ENCODE measurements at regions of chr17 and their contacts with region 1.

Region 1: DNA sequence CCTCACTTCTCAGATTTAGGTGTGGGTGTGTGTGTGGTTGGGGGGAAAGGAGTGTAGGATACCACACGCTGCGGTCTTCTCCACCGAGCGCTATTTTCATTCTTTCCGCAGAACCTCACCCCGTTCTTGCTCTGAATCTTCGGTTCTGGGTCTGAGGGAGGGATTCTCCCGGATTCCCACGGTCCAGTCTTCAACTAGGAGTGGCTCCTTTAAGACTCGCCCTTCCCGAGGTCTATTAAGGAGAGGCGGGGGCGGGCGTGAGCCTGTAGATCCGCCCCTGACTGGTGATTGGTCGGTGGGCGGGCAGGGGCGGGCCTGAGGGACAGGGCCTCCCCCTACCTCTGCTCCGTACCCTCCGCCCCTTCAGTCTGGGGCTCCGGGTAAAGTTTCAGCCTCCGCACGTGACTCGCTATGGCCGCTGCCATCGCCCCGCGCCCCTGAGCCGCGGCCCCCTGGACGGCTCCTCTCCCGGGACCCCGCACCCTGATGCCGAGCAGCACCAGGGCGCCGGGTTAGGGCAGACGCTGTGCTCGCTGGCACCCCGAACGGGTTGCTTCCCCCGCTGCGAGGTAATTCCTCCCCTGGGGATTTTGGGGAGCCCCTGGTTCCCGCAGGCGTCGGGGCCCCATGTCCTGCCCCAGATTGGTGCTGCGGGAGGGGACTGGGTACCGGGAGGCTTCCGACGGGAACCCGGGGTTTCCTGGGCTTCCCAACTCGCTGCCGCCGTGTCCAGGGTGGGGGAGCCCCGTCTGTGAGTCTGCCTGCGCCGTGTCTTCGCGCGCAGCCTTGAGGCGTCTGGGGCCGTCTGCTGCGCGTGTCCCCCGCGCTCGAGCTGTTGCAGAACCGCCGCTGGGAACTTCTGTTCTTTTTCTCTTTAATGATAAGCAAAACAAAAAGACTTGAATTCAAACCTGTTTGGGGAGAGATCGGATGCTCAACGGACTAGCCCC is 9.2 kb downstream of the RARA start:
- DNase-seq: peak; percentile 88 to 96 (median 91)
- ATAC-seq: peak; percentile 61
- H3K4me3 ChIP-seq: peak overlapping the region; percentile 91 to 95
- H3K4me3 Mint-ChIP-seq: peak overlapping the region; percentile 91
- H3K27ac ChIP-seq: peak overlapping the region; percentile 94 to 97
- H3K27ac Mint-ChIP-seq: peak overlapping the region; percentile 99
- H3K4me1 ChIP-seq: peaks cover 72% of the 10 kb centered on the region
- H3K4me1 Mint-ChIP-seq: peaks cover 87% of the 10 kb centered on the region
- H3K27me3 ChIP-seq: no peaks in the 10 kb centered on the region
- H3K27me3 Mint-ChIP-seq: no peaks in the 10 kb centered on the region
- CTCF ChIP-seq: no peak

Region 2: DNA sequence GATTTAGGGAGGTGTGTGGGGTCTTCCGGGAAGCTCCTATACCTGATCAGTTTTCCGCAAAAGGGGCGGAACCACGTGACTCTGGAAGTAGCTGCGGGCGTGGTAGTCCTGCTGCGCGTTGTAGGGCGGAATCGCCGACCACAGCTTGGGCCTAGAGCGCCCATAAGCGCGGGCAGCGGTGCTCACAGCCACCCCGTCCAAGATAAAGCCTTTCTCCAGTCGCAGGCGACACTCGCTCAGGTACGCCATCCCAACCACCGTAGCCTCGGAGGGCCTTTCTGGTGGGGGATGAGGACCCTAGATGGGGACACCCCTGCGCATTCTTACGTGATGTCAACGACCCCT is 1477.0 kb before region 1 on chr17:
- CTCF ChIA-PET with region 1: no interaction called
- POLR2A ChIA-PET with region 1: no interaction called
- intact Hi-C with region 1: no loop called
- DNase-seq: peak in 1 of 9 experiments; percentile 38
- ATAC-seq: no peak
- H3K4me3 ChIP-seq: peak overlapping the region in 1 of 2 experiments; percentile 28
- H3K4me3 Mint-ChIP-seq: peak overlapping the region; percentile 66
- H3K27ac ChIP-seq: no peak overlapping the region
- H3K27ac Mint-ChIP-seq: no peak overlapping the region
- H3K4me1 ChIP-seq: no peaks in the 10 kb centered on the region
- H3K4me1 Mint-ChIP-seq: no peaks in the 10 kb centered on the region
- H3K27me3 ChIP-seq: no peaks in the 10 kb centered on the region
- H3K27me3 Mint-ChIP-seq: no peaks in the 10 kb centered on the region
- CTCF ChIP-seq: no peak

Region 3: GRCh38 chr17:39769974-39770587 is 548.1 kb before region 1 on chr17:
- CTCF ChIA-PET with region 1: no interaction called
- POLR2A ChIA-PET with region 1: no interaction called
- intact Hi-C with region 1: loop called in 1 of 2 experiments (anchors 10 kb)
- DNase-seq: peak in 8 of 9 experiments; percentile 38 to 90 (median 66)
- ATAC-seq: peak; percentile 78
- H3K4me3 ChIP-seq: peak overlapping the region in 1 of 2 experiments; percentile 1
- H3K4me3 Mint-ChIP-seq: peak overlapping the region; percentile 66
- H3K27ac ChIP-seq: peak overlapping the region; percentile 46 to 82
- H3K27ac Mint-ChIP-seq: peak overlapping the region; percentile 97
- H3K4me1 ChIP-seq: peaks cover 99% of the 10 kb centered on the region
- H3K4me1 Mint-ChIP-seq: peaks cover 96% of the 10 kb centered on the region
- H3K27me3 ChIP-seq: no peaks in the 10 kb centered on the region
- H3K27me3 Mint-ChIP-seq: no peaks in the 10 kb centered on the region
- CTCF ChIP-seq: no peak

Region 4: DNA sequence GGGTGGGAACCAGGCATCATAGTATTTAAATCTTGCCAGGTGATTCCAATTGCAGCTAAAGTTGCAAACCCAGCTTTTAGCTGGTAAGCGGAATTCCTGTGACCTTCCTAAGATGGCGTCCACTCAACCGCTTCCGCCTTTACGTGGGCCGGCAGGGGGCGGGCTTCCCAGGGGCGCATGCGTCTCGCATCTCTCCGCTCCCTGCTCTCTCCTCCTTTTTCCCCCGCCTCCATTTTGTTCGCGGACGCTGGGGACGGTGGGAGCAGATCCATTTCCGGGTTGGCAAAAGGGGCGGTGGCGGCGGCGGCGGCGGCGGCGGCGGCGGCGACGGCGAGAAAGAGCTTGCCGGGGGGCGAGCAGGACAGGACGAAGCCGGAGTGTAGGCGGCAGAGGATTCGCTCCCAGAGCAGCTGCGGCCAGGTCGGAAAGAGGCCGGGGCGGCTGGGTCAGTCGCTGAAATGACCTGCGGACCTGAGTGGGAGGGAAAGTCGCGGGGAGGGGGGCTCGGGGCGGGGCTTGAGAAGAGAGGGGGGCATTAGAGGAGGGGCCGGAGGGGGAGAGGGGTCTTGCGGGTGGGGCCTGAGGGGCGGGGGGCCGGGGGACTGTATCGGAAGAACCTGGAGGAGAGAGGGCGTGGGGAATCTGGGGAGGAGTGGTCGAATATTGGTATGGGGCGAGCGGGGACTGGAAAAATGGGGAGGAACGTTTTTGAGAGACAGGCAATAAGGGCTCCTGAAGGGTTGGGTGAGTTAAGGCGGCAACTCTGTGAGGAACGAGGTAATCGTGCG is 98.9 kb before region 1 on chr17 and contains the start of gene WIPF2:
- CTCF ChIA-PET with region 1: no interaction called
- POLR2A ChIA-PET with region 1: no interaction called
- intact Hi-C with region 1: loop called in 1 of 2 experiments (anchors 1 kb)
- DNase-seq: peak; percentile 92 to 98 (median 96)
- ATAC-seq: peak; percentile 90
- H3K4me3 ChIP-seq: peak within 1 kb of the TSS; percentile 83 to 87
- H3K4me3 Mint-ChIP-seq: peak within 1 kb of the TSS; percentile 95
- H3K27ac ChIP-seq: peak within 1 kb of the TSS; percentile 99
- H3K27ac Mint-ChIP-seq: peak within 1 kb of the TSS; percentile 100
- H3K4me1 ChIP-seq: peaks cover 8% of the 10 kb centered on the region
- H3K4me1 Mint-ChIP-seq: peaks cover 30% of the 10 kb centered on the region
- H3K27me3 ChIP-seq: no peaks in the 10 kb centered on the region
- H3K27me3 Mint-ChIP-seq: no peaks in the 10 kb centered on the region
- CTCF ChIP-seq: peak; percentile 53
- total RNA-seq, gene WIPF2: 26.8 to 30.8 TPM

Region 5: GRCh38 chr17:40253565-40253964 is 64.6 kb before region 1 on chr17:
- CTCF ChIA-PET with region 1: no interaction called
- POLR2A ChIA-PET with region 1: no interaction called
- intact Hi-C with region 1: no loop called
- DNase-seq: no peak
- ATAC-seq: no peak
- H3K4me3 ChIP-seq: no peak overlapping the region
- H3K4me3 Mint-ChIP-seq: no peak overlapping the region
- H3K27ac ChIP-seq: no peak overlapping the region
- H3K27ac Mint-ChIP-seq: no peak overlapping the region
- H3K4me1 ChIP-seq: no peaks in the 10 kb centered on the region
- H3K4me1 Mint-ChIP-seq: peaks cover 31% of the 10 kb centered on the region
- H3K27me3 ChIP-seq: no peaks in the 10 kb centered on the region
- H3K27me3 Mint-ChIP-seq: no peaks in the 10 kb centered on the region
- CTCF ChIP-seq: no peak

Region 6: DNA sequence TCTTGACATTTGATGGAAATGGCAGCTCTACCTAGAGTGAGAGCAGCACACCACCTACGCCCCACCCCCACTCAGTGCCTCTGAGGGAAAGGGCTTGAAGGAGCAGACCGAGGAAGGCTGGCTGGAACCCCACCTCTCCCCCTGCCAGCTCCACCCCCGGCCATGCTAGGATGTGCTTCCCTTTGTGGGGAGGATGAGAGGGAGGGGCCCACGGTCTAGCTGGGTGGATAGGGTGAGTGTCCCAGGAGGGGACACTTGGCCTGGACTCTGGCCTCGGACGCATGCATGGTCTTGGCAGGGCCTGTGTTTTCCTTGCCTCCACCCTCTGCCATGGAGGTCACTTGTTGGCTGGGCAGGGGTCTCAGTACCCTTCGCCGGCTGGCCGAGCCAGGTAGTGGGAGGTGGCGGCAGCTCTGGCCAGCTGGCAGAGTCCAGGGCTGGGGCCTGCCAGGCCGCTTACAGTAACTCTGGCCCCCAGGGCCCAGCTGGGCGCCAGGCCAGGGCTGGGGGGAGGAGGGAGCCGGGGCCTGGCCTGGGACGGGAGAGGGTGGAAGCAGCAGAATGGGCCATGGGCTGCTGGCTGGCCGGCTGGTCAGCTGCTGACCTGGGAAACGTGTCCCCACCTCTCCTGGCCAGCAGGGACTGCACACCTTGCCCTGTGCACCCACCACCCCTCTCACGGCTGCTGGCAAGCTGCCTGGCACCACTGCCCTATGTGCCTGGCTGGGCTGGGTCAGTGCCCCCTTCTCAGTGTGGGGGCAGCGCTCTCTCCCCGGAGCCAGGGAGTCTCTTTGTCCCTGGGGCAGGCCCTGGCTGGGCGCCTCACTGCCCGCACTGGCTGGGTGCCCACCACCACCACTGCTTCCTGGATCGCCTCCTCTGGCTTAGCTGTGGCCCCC is 13.8 kb after region 1 on chr17:
- CTCF ChIA-PET with region 1: interaction called, 4 read pairs
- POLR2A ChIA-PET with region 1: interaction called, 18 read pairs
- intact Hi-C with region 1: no loop called
- DNase-seq: peak in 1 of 9 experiments; percentile 20
- ATAC-seq: no peak
- H3K4me3 ChIP-seq: no peak overlapping the region
- H3K4me3 Mint-ChIP-seq: peak overlapping the region; percentile 15
- H3K27ac ChIP-seq: no peak overlapping the region
- H3K27ac Mint-ChIP-seq: peak overlapping the region; percentile 67
- H3K4me1 ChIP-seq: peaks cover 82% of the 10 kb centered on the region
- H3K4me1 Mint-ChIP-seq: peaks cover 75% of the 10 kb centered on the region
- H3K27me3 ChIP-seq: no peaks in the 10 kb centered on the region
- H3K27me3 Mint-ChIP-seq: no peaks in the 10 kb centered on the region
- CTCF ChIP-seq: no peak

Region 7: DNA sequence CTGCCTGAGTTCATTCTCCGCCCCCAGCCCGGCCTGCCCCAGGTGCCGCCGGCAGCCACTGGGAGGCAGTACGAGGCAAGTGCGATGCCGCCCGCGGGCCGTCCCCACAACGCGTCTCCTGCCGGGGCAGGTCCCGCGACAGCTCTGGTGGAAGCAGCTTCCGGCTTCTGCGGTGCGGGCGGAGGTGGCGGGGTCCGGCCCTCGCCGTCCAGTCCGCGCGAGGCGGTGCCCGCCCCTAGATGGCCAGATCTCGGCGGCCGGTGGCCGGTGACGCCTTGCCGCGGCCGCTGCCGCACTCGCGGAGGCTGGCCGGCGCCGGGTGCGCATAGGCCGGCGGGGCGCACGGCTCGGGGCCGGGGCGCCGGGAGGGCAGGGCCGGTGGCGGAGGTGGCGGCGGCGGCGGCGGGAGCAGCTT is 44.5 kb after region 1 on chr17:
- CTCF ChIA-PET with region 1: interaction called, 1,103 read pairs
- POLR2A ChIA-PET with region 1: no interaction called
- intact Hi-C with region 1: loop called in 1 of 2 experiments (anchors 5 kb)
- DNase-seq: peak; percentile 55 to 82 (median 77)
- ATAC-seq: peak; percentile 79
- H3K4me3 ChIP-seq: peak overlapping the region in 1 of 2 experiments; percentile 20
- H3K4me3 Mint-ChIP-seq: peak overlapping the region; percentile 78
- H3K27ac ChIP-seq: no peak overlapping the region
- H3K27ac Mint-ChIP-seq: no peak overlapping the region
- H3K4me1 ChIP-seq: peaks cover 15% of the 10 kb centered on the region
- H3K4me1 Mint-ChIP-seq: peaks cover 10% of the 10 kb centered on the region
- H3K27me3 ChIP-seq: peaks cover 0 to 6% of the 10 kb centered on the region in 2 experiments
- H3K27me3 Mint-ChIP-seq: peaks cover 6% of the 10 kb centered on the region
- CTCF ChIP-seq: peak; percentile 62

Region 8: DNA sequence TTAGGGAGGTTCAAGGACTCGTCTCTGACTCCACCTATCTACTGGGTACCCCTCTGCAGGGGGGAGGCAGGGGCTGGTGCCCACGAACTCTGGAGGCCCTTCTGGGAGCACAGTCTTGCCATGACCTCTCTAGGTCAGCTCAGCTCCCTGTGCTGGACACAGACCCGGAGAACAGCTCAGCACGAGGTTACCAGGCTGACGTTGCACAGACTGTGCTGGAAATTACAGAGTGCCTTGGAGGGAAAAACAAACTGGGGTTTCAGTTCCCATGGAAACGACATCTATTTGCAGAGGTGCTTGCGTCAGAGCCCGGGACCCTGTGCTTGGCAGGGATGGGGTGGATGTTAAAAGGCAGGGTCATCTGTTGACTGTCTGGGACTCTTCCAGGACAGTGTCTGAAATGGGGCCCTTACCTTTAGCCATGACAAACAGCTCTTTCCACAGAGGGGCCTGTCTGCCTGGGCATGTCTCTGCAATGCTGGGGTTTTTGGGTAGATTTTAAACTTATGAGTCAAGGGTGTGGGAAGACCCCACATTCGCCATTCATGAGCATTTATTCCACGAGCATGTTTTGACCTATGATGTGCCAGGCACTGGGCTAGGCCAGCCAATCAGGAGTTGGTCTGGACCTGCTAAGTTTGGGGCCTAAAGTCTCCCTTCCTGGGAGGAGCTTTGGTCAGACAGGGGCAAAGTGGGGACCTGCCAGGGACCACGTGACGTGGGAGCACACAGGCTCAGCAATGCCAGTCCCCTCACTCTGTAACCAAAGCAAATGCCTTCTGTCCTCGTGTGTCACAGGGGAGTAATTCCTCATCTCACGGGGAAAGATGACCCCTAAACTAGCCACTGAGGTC is 224.6 kb after region 1 on chr17:
- CTCF ChIA-PET with region 1: no interaction called
- POLR2A ChIA-PET with region 1: interaction called, 3 read pairs
- intact Hi-C with region 1: loop called (anchors 2 to 5 kb)
- DNase-seq: peak in 6 of 9 experiments; percentile 21 to 75 (median 58)
- ATAC-seq: peak; percentile 3
- H3K4me3 ChIP-seq: no peak overlapping the region
- H3K4me3 Mint-ChIP-seq: peak overlapping the region; percentile 72
- H3K27ac ChIP-seq: peak overlapping the region in 1 of 2 experiments; percentile 66
- H3K27ac Mint-ChIP-seq: peak overlapping the region; percentile 96
- H3K4me1 ChIP-seq: peaks cover 86% of the 10 kb centered on the region
- H3K4me1 Mint-ChIP-seq: peaks cover 88% of the 10 kb centered on the region
- H3K27me3 ChIP-seq: no peaks in the 10 kb centered on the region
- H3K27me3 Mint-ChIP-seq: no peaks in the 10 kb centered on the region
- CTCF ChIP-seq: no peak

Region 9: DNA sequence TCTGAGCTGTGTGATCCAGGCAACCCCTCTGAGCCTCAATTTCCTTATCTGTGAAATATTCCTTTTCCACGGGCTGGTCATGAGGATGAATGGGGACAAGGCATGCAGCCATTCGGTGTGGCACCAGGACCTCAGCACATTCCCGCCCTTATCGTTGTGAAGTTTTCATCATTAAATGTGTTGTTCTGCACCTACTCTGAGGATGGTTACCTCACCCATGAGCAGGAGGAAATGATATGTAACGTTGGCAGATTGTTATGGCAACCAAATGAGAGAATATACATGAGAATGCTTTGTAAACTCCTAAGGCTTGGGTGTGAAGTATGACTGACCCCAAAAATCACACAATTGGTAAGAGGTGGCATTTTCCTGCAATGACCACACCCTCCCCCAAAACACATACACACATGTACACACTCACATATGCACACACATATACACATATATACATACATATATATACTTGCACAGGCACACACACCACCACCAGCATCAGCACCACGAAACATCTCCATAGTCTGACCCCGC is 290.0 kb after region 1 on chr17:
- CTCF ChIA-PET with region 1: no interaction called
- POLR2A ChIA-PET with region 1: no interaction called
- intact Hi-C with region 1: loop called (anchors 2 kb)
- DNase-seq: peak in 4 of 9 experiments; percentile 42 to 94 (median 76)
- ATAC-seq: peak; percentile 56
- H3K4me3 ChIP-seq: peak overlapping the region; percentile 22 to 43
- H3K4me3 Mint-ChIP-seq: peak overlapping the region; percentile 66
- H3K27ac ChIP-seq: peak overlapping the region; percentile 92 to 99
- H3K27ac Mint-ChIP-seq: peak overlapping the region; percentile 98
- H3K4me1 ChIP-seq: peaks cover 97% of the 10 kb centered on the region
- H3K4me1 Mint-ChIP-seq: peaks cover 96% of the 10 kb centered on the region
- H3K27me3 ChIP-seq: no peaks in the 10 kb centered on the region
- H3K27me3 Mint-ChIP-seq: no peaks in the 10 kb centered on the region
- CTCF ChIP-seq: no peak

Measured in CD8-positive, alpha-beta T cell (primary cell).